IMR-90 (cell line): ENCODE measurements at regions of chr5 and their contacts with region 1.

Region 1: GRCh38 chr5:142324871-142325724 is at the start of gene SPRY4:
- DNase-seq: peak; percentile 98
- ATAC-seq: peak; percentile 40
- H3K4me3 ChIP-seq: peak within 1 kb of the TSS; percentile 68
- H3K27ac ChIP-seq: peak within 1 kb of the TSS; percentile 100
- H3K4me1 ChIP-seq: peaks cover 31% of the 10 kb centered on the region
- H3K27me3 ChIP-seq: no peaks in the 10 kb centered on the region
- CTCF ChIP-seq: no peak; the same call in 1 of the 2 replicates
- POLR2A ChIP-seq: peak; percentile 98
- RAD21 ChIP-seq: peak; percentile 30; the same call in 1 of the 2 replicates
- total RNA-seq, gene SPRY4: 8.4 and 10.3 TPM in 2 replicates

Region 2: GRCh38 chr5:142215915-142216681 is 109.0 kb before region 1 on chr5:
- CTCF ChIA-PET with region 1: interaction called, 3 read pairs
- POLR2A ChIA-PET with region 1: no interaction called
- dilution Hi-C with region 1: no loop called
- in situ Hi-C with region 1: no loop called
- intact Hi-C with region 1: loop called (anchors 5 kb)
- DNase-seq: peak; percentile 98
- ATAC-seq: peak; percentile 97
- H3K4me3 ChIP-seq: no peak overlapping the region
- H3K27ac ChIP-seq: peak overlapping the region; percentile 50
- H3K4me1 ChIP-seq: peaks cover 7% of the 10 kb centered on the region; the same call in 1 of the 2 replicates
- H3K27me3 ChIP-seq: peaks cover 1% of the 10 kb centered on the region; the same call in 1 of the 2 replicates
- CTCF ChIP-seq: no peak
- POLR2A ChIP-seq: no peak
- RAD21 ChIP-seq: no peak; the same call in 1 of the 2 replicates

Region 3: GRCh38 chr5:142356716-142357473 is 31.8 kb after region 1 on chr5:
- CTCF ChIA-PET with region 1: interaction called, 4 read pairs
- POLR2A ChIA-PET with region 1: interaction called, 4 read pairs
- dilution Hi-C with region 1: no loop called
- in situ Hi-C with region 1: no loop called
- intact Hi-C with region 1: loop called (anchors 1 kb)
- DNase-seq: peak; percentile 92
- ATAC-seq: peak; percentile 87
- H3K4me3 ChIP-seq: peak overlapping the region; percentile 46
- H3K27ac ChIP-seq: peak overlapping the region; percentile 95
- H3K4me1 ChIP-seq: peaks cover 12% of the 10 kb centered on the region
- H3K27me3 ChIP-seq: no peaks in the 10 kb centered on the region
- CTCF ChIP-seq: 0 out of 2 replicates have a peak, but pooled peaks have one; percentile 9
- POLR2A ChIP-seq: peak; percentile 83
- RAD21 ChIP-seq: no peak; the same call in 1 of the 2 replicates

Region 4: GRCh38 chr5:142446131-142446959 is 121.2 kb after region 1 on chr5:
- CTCF ChIA-PET with region 1: no interaction called
- POLR2A ChIA-PET with region 1: interaction called, 4 read pairs
- dilution Hi-C with region 1: no loop called
- in situ Hi-C with region 1: no loop called
- intact Hi-C with region 1: loop called (anchors 2 kb)
- DNase-seq: peak; percentile 84
- ATAC-seq: peak; percentile 82
- H3K4me3 ChIP-seq: no peak overlapping the region
- H3K27ac ChIP-seq: peak overlapping the region; percentile 98
- H3K4me1 ChIP-seq: peaks cover 16% of the 10 kb centered on the region
- H3K27me3 ChIP-seq: no peaks in the 10 kb centered on the region
- CTCF ChIP-seq: no peak
- POLR2A ChIP-seq: no peak
- RAD21 ChIP-seq: no peak

Region 5: DNA sequence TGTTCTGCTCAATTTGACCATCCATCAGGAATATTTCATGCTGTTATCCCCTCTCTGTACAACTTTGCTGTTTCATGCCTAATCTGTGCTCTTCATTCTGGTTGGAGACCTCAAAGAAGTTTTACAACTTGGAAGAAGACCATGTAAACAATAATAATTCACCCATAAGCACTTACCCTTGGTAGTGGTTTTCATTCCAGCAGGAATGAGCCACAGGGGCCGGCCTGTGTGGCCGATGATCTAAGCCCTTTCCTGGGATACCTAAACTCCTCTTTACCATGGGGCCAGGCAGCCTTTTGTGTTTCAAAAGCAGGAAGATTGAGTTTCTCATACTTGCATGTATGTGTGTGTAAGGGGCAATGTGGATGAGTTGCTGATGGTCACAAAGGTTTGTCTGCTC is 195.8 kb after region 1 on chr5:
- CTCF ChIA-PET with region 1: no interaction called
- POLR2A ChIA-PET with region 1: interaction called, 5 read pairs
- dilution Hi-C with region 1: no loop called
- in situ Hi-C with region 1: no loop called
- intact Hi-C with region 1: loop called (anchors 1 kb)
- DNase-seq: peak; percentile 78
- ATAC-seq: peak; percentile 95
- H3K4me3 ChIP-seq: no peak overlapping the region
- H3K27ac ChIP-seq: no peak overlapping the region
- H3K4me1 ChIP-seq: peaks cover 5% of the 10 kb centered on the region; the same call in 1 of the 2 replicates
- H3K27me3 ChIP-seq: no peaks in the 10 kb centered on the region
- CTCF ChIP-seq: no peak
- POLR2A ChIP-seq: no peak
- RAD21 ChIP-seq: no peak

Region 6: GRCh38 chr5:142699184-142699720 is 374.2 kb after region 1 on chr5:
- CTCF ChIA-PET with region 1: interaction called, 3 read pairs
- POLR2A ChIA-PET with region 1: interaction called, 16 read pairs
- dilution Hi-C with region 1: no loop called
- in situ Hi-C with region 1: no loop called
- intact Hi-C with region 1: loop called (anchors 5 kb)
- DNase-seq: peak; percentile 84
- ATAC-seq: peak; percentile 98
- H3K4me3 ChIP-seq: no peak overlapping the region
- H3K27ac ChIP-seq: no peak overlapping the region
- H3K4me1 ChIP-seq: peaks cover 10% of the 10 kb centered on the region
- H3K27me3 ChIP-seq: no peaks in the 10 kb centered on the region
- CTCF ChIP-seq: peak; percentile 99
- POLR2A ChIP-seq: peak; percentile 69
- RAD21 ChIP-seq: peak; percentile 100